ENCODE measurements at regions of chr11 and their contacts with region 1.

Region 1: DNA sequence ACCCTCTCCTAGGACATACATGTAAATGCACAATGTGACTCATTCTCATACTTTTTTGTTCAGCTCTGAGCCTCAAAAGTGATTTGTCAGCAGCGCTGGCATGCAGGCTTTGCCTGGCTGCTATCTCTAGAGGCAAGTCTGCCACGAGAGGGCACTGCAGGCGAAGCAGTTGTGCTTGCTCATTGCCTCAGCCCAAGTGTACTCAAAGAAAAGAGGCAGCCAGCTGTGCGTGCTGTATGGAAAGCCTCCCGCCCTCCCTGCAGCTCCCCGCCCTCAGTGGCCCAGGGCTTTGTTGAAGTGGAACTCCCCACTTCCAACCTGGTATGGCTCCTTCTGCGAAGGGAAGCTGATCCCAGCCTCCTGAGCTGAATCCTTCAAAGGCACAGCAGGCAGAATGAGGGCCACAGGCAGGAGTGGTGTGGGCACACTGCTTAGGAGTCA is 16.3 kb downstream of the SDHAF2 start:
- DNase-seq: peak; percentile 82
- H3K4me3 ChIP-seq: no peak overlapping the region
- H3K27me3 ChIP-seq: no peaks in the 10 kb centered on the region
- CTCF ChIP-seq: peak; percentile 97

Region 2: DNA sequence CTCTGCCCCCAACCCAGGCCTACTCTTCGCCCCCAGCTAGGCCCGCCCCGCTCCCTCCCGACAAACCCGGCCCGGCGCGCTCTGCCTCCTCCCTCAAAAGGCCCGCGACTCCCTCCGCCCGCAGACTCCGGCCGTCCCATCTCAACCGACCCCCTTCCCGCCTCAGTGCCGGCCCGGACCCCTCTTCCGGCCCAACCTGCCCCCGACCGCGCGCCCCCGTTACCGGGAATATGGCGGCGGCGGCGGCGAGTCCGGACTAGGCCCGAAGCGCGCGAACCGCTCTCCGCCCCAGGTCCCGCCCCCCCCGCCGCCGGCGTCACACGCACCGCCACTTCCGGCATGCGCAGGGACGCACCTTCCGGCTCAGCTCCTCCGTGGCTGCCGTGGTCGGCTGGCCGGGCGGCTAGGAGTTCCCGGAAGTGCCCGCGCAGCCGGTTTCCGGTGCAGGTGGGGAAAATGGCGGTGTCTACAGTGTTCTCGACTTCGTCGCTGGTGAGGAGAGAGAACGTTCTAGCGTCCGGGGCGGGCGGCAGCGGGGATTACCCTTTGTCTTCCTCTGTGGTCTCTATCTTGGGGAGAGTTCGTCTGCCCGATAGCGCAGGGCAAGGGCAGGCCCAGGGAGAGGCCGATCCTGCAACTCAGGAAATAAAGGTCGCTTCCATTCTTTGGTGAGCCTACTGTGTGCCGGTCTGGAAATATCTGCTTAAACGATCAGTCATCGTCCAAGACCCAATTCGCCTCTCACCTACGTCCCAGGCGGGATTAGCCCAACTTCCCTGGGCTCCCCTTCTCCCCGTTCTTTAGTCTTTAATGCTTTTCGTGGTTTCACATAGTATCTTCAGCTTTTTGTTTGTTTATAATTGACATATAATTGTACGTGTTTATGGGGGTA is 16.3 kb before region 1 on chr11 and contains the starts of genes CPSF7 and SDHAF2:
- CTCF ChIA-PET with region 1: interaction called, 73 read pairs
- POLR2A ChIA-PET with region 1: no interaction called
- DNase-seq: peak; percentile 52
- H3K4me3 ChIP-seq: peak within 1 kb of the TSS; percentile 75
- H3K27me3 ChIP-seq: no peaks in the 10 kb centered on the region
- CTCF ChIP-seq: no peak
- polyA plus RNA-seq, gene CPSF7: 35.4 and 36.2 TPM in 2 replicates
- polyA plus RNA-seq, gene SDHAF2: 67.7 and 81.1 TPM in 2 replicates

Region 3: GRCh38 chr11:61477727-61478148 is 31.5 kb after region 1 on chr11:
- CTCF ChIA-PET with region 1: interaction called, 35 read pairs
- POLR2A ChIA-PET with region 1: no interaction called
- DNase-seq: no peak
- H3K4me3 ChIP-seq: no peak overlapping the region
- H3K27me3 ChIP-seq: peaks cover 1% of the 10 kb centered on the region
- CTCF ChIP-seq: peak; percentile 90

Region 4: DNA sequence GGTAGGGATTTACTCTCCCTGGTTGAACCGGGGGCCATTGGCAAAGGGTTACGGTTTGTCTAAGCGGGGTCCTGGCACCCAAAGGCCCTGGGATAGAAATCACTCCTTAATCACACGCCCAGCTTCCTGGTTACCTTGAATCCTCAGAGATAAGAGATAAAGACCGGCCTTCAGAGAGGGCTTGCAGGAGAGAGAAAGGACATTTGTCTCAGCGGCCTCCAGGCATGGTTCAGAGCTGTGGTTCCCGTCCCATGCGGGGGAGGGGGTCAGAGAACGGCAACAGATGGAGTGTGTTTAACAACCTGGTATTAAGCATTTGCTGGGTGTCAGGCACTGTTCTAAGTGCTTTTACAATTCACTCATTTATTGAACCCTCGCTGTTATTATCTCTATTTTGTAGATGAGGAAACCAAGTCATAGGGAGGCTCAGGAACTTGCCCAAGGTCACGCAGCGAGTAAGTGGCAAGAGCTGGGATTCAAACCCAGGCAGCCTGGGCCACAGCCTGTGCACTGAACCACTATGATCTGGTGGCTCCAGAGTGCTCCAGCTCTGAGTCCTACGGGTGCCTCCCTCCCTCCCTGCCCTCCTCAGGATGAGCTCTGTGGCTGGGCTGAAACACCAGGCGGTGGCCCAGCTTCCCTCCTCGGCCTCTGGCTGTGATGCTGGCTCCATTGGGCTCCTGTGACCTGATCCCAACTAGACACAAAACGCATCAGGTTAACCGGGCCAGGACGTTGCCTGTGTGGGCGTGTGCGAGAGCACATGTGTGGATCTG is 80.9 kb after region 1 on chr11:
- CTCF ChIA-PET with region 1: interaction called, 16 read pairs
- POLR2A ChIA-PET with region 1: no interaction called
- DNase-seq: no peak
- H3K4me3 ChIP-seq: no peak overlapping the region
- H3K27me3 ChIP-seq: peaks cover 26% of the 10 kb centered on the region
- CTCF ChIP-seq: no peak

Region 5: DNA sequence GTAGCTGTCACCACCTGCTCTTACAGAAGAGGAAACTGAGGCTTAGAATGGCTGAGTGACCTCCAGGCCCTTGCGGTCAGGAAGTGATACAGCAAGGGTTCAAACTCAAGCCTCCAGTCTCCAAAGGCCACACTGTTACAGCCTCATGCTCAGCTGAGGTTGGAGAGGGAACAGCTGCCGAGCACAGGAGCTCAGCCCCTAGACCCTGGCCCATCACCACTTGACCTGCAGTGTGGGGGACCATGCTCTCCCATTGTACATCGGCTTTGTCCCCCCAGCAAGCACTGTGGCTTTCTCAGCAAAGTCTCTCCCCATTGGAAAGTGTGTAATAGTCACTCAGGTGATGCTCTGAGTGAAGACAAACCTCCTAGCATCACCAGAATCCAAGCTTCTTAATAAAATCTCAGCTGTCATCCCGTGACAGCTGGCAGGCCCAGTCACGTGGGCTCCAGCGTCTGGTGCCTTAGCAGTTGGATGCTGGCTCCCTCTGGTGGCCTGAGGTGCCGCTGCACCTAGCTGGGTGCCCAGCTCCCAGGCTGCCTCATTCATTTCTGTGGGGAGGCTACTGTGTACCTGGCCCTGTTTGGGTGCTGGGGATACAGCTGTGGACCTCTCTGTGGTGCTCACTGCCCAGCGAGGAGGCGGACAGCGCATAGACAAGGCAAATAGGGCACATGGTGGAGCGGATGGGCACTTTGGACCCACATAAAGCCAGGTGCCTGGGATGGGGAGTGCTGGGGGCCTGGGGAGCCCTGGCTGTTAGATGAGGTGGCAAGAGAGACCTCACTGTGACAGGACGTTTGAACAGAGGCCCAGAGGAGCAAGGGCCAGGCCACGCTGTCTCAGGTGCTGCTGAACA is 287.1 kb after region 1 on chr11:
- CTCF ChIA-PET with region 1: interaction called, 10 read pairs
- POLR2A ChIA-PET with region 1: no interaction called
- DNase-seq: peak; percentile 18
- H3K4me3 ChIP-seq: no peak overlapping the region
- H3K27me3 ChIP-seq: no peaks in the 10 kb centered on the region
- CTCF ChIP-seq: peak; percentile 100